OCI-LY7 (cell line): ENCODE measurements at regions of chr1 and their contacts with region 1.

Region 1: DNA sequence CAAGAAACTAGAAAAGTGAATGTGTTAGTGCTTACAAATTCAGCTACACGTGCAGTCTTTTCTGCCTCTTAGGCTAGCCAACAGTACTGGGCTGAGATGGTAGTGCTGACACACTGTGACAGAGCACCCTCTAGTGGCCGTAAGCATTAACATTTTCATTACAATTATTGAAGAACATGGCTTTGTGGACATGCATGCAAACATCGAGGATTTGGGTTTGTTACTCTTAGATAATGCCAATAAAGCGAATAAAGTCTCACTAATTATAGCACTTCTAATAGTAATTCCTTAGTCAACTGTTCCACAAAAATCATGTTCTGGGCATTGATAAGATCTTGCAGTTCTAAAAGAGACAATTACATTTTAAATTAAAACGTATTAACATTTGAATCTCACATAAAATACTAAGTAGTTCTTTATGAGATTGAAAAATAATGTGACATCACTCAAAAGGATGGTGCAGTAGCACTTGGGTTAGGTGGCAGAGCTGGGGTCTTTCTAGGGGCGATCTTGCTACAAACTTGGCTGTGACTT is 47.1 kb downstream of the MYSM1 start:
- DNase-seq: peak; percentile 78
- H3K4me3 ChIP-seq: no peak overlapping the region
- H3K27ac ChIP-seq: no peak overlapping the region
- H3K4me1 ChIP-seq: peaks cover 9% of the 10 kb centered on the region
- CTCF ChIP-seq: peak; percentile 95

Region 2: GRCh38 chr1:58515794-58516401 is 136.8 kb before region 1 on chr1:
- CTCF ChIA-PET with region 1: no interaction called
- POLR2A ChIA-PET with region 1: no interaction called
- intact Hi-C with region 1: loop called (anchors 2 kb)
- DNase-seq: peak; percentile 78
- H3K4me3 ChIP-seq: no peak overlapping the region
- H3K27ac ChIP-seq: no peak overlapping the region
- H3K4me1 ChIP-seq: no peaks in the 10 kb centered on the region
- CTCF ChIP-seq: peak; percentile 91

Region 3: DNA sequence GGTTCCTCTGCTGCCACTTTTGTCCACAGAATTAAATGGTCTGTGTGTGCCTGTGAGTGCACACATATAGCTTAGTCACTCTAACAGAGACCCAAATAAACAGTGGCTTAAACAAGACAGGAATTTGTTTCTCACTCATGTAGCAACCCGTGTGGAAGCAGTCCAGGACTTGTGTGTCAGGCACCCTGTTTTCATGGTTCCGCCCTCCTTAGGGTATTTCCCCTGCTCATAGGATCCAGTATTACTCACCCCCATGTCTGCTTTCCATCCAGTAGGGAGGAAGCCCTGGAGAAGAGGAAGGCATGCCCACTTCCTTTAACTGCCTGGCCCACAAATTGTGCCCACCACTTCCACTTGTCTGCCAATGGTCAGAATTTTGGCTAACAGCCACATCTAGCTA is 34.4 kb before region 1 on chr1:
- CTCF ChIA-PET with region 1: no interaction called
- POLR2A ChIA-PET with region 1: no interaction called
- intact Hi-C with region 1: no loop called
- DNase-seq: no peak
- H3K4me3 ChIP-seq: no peak overlapping the region
- H3K27ac ChIP-seq: no peak overlapping the region
- H3K4me1 ChIP-seq: no peaks in the 10 kb centered on the region
- CTCF ChIP-seq: no peak

Region 4: GRCh38 chr1:58702261-58703141 is 49.8 kb after region 1 on chr1:
- CTCF ChIA-PET with region 1: no interaction called
- POLR2A ChIA-PET with region 1: no interaction called
- intact Hi-C with region 1: no loop called
- DNase-seq: no peak
- H3K4me3 ChIP-seq: no peak overlapping the region
- H3K27ac ChIP-seq: no peak overlapping the region
- H3K4me1 ChIP-seq: peaks cover 8% of the 10 kb centered on the region
- CTCF ChIP-seq: no peak

Region 5: GRCh38 chr1:59759156-59759925 is 1106.6 kb after region 1 on chr1:
- CTCF ChIA-PET with region 1: no interaction called
- POLR2A ChIA-PET with region 1: no interaction called
- intact Hi-C with region 1: loop called (anchors 5 kb)
- DNase-seq: peak; percentile 64
- H3K4me3 ChIP-seq: peak overlapping the region; percentile 18
- H3K27ac ChIP-seq: no peak overlapping the region
- H3K4me1 ChIP-seq: no peaks in the 10 kb centered on the region
- CTCF ChIP-seq: peak; percentile 91